Activated T-helper 2 cell treated with anti-CD3 and anti-CD28 coated beads, Interferon-gamma antibody, Interleukin-2, Interleukin-4, amounts not matched to agents 10 μg/mL and 5 μg/mL and 100 μg/mL, durations not matched to agents 14 hours and 24 hours and 36 hours (primary cell): ENCODE measurements at regions of chr3 and their contacts with region 1.

Region 1: DNA sequence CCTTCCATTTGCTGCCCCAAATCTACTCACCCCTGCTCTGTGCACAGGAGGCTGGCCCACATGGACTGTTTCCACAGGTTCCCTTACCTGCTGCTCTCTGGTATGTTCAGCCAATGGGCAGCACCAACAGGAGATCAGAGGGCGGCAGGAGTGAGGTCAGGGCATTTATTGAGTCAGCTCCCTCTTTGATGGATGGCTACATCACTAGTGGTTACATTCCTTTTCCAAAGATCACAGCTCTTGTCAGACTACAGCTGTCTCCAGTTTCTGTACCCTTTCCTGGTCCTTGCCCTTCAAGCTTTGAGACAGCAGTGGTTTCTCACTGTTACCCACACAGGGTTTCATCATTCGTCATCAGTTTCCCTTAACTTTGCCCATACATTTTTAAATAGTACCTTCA is 325.1 kb downstream of the SUCLG2 start:
- DNase-seq: no peak
- H3K4me3 Mint-ChIP-seq: no peak overlapping the region
- H3K27ac Mint-ChIP-seq: no peak overlapping the region
- H3K4me1 Mint-ChIP-seq: peaks cover 30% of the 10 kb centered on the region
- H3K27me3 Mint-ChIP-seq: peaks cover 15% of the 10 kb centered on the region

Region 2: DNA sequence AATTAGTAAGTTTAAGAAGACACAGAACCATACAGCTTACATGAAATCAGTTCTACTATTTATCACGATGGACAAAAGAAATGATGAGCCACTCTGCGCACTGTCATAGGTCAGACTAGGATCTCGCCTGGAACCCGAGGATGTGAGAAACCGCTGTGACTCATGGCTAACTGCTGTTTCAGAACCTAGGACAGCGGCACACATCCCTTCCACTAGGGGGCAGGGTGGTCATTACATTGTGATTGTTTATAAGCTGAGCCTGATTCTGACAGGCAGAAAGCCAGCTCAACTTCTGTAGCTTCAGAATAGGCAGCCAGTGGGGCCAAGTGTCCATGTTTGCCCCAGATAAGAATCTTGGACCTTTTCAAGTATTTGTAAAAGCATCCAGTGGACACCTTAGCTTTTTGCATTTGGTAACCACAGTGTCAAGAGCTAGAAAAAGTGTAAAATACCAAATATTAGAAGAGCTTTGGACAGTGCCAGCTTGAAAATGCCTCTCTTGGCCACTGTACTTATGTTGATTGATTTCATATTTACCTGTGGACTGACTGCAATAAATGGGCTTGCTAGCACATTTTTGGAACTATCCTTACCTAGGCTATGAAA is 215.5 kb before region 1 on chr3:
- intact Hi-C with region 1: no loop called
- DNase-seq: peak; percentile 68
- H3K4me3 Mint-ChIP-seq: no peak overlapping the region
- H3K27ac Mint-ChIP-seq: no peak overlapping the region
- H3K4me1 Mint-ChIP-seq: peaks cover 5% of the 10 kb centered on the region
- H3K27me3 Mint-ChIP-seq: peaks cover 2% of the 10 kb centered on the region

Region 3: GRCh38 chr3:67290438-67290837 is 38.9 kb before region 1 on chr3:
- intact Hi-C with region 1: loop called (anchors 5 kb)
- DNase-seq: no peak
- H3K4me3 Mint-ChIP-seq: no peak overlapping the region
- H3K27ac Mint-ChIP-seq: no peak overlapping the region
- H3K4me1 Mint-ChIP-seq: peaks cover 10% of the 10 kb centered on the region
- H3K27me3 Mint-ChIP-seq: no peaks in the 10 kb centered on the region

Region 4: DNA sequence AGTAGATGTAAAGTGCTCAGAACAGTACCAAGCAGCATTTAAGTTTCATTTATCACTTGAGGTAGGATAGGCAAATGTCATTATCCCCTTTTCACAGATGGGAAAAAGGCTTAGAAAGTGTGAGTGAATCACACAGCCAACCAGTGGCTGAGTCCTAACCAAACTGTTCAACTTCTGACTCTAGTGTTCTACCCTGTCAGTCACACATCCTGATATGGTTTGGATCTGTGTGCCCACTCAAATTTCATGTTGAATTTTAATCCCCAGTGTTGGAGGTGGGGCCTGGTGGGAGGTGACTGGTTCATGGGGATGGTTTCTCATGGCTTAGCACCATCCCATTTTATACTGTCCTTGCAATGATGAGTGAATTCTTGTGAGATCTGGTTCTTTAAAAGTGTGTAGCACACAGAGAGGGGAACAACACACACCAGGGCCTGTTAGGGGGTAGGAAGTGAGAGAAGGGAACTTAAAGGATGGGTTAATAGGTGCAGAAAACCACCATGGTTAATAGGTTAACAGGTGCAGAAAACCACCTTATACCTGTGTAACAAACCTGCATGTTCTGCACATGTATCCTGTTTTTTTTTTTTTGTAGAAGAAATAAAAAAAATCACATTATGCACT is 20.3 kb after region 1 on chr3:
- intact Hi-C with region 1: loop called (anchors 1 kb)
- DNase-seq: no peak
- H3K4me3 Mint-ChIP-seq: no peak overlapping the region
- H3K27ac Mint-ChIP-seq: peak overlapping the region; percentile 29
- H3K4me1 Mint-ChIP-seq: peaks cover 10% of the 10 kb centered on the region
- H3K27me3 Mint-ChIP-seq: peaks cover 9% of the 10 kb centered on the region

Region 5: DNA sequence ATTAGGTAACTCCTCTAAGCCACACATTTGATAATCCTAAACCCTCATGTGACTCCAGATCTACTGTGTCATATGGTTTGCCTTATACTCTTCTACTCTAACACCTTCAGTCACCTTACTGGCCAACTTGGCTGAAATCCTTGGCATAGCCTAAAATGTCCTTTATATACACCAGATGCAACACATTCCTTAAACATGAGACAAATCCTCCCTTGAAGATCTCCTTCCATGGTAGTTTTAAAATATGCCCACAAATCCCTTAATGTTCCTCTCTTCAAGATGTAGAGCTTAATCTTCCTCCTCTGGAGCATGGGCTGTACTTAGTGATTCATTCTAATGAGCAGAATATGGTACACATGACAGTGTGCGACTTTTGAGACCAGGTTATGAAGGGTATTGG is 86.2 kb after region 1 on chr3:
- intact Hi-C with region 1: no loop called
- DNase-seq: no peak
- H3K4me3 Mint-ChIP-seq: no peak overlapping the region
- H3K27ac Mint-ChIP-seq: no peak overlapping the region
- H3K4me1 Mint-ChIP-seq: peaks cover 2% of the 10 kb centered on the region
- H3K27me3 Mint-ChIP-seq: no peaks in the 10 kb centered on the region